Heart left ventricle (tissue), 16 donors: ENCODE measurements at regions of chr1 and their contacts with region 1.

Region 1: GRCh38 chr1:27525296-27526272 is 35.6 kb upstream of the WASF2 start:
- DNase-seq: peak; percentile 90 to 94 (median 91)
- ATAC-seq: peak; percentile 73 to 80 (median 78)
- H3K4me3 ChIP-seq: peak overlapping the region in 11 of 12 donors; percentile 7 to 65 (median 49)
- H3K27ac ChIP-seq: peak overlapping the region; percentile 83 to 97 (median 92)
- H3K4me1 ChIP-seq: peaks cover 25 to 93% (median 86%) of the 10 kb centered on the region in 12 donors
- H3K27me3 ChIP-seq: no peaks in the 10 kb centered on the region
- CTCF ChIP-seq: no peak
- POLR2A ChIP-seq: peak in 1 of 2 donors; percentile 16

Region 2: GRCh38 chr1:27402349-27402754 is 123.2 kb before region 1 on chr1:
- intact Hi-C with region 1: loop called in 1 of 10 experiments (anchors 10 kb)
- DNase-seq: peak; percentile 68 to 87 (median 83)
- ATAC-seq: peak; percentile 38 to 57 (median 42)
- H3K4me3 ChIP-seq: no peak overlapping the region
- H3K27ac ChIP-seq: peak overlapping the region; percentile 76 to 87 (median 85)
- H3K4me1 ChIP-seq: peaks cover 27 to 96% (median 80%) of the 10 kb centered on the region in 12 donors
- H3K27me3 ChIP-seq: no peaks in the 10 kb centered on the region
- CTCF ChIP-seq: peak; percentile 42 to 70 (median 60)
- POLR2A ChIP-seq: no peak

Region 3: GRCh38 chr1:27503797-27504587 is 21.6 kb before region 1 on chr1:
- intact Hi-C with region 1: no loop called
- DNase-seq: peak in 1 of 5 donors; percentile 56
- ATAC-seq: peak in 3 of 4 donors; percentile 3 to 15 (median 3)
- H3K4me3 ChIP-seq: peak overlapping the region in 9 of 12 donors; percentile 2 to 46 (median 34)
- H3K27ac ChIP-seq: peak overlapping the region; percentile 88 to 99 (median 93)
- H3K4me1 ChIP-seq: peaks cover 8 to 38% (median 25%) of the 10 kb centered on the region in 12 donors
- H3K27me3 ChIP-seq: no peaks in the 10 kb centered on the region
- CTCF ChIP-seq: no peak
- POLR2A ChIP-seq: no peak

Region 4: DNA sequence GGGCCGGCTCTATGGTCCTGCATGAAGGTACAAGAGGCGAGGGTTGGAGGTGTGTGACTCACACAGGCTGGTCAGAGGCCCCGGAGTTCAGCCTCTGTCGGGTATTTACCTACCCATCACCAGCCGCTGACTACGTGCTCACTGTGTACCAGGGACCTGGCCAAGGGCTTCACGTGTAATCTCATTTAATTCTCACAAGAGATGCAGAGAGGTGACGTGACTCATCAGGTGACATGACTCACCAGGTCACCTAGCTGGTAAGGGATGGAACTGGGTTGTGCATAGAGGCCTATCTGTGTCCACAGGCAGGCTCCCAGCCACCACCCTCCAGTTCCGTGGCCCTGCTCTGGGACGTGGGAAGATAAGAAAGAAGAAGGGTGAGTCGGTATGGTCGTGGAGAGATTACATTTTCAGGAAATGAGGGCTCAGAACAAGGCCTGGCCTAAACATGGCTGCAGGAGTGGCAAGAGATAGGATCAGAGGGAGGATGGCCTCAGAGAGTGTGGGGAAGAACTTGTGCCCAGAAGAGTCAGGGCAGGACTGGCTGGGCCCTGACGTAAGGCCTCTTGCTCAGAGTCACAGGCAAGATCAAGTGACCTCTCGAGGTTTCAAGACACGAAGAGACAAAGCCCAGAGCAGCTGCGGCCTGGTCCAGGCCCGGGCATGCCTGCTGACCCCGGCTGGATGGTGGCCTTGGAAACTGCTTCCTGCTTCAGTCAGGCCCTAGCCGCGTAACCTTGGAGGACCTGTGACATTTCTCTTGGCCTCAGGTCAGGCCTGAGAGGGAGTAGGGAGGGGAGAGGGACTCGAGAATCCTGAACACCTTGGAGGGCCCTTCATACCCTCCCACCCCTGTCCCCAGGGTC is 17.1 kb after region 1 on chr1:
- intact Hi-C with region 1: loop called in 1 of 10 experiments (anchors 2 kb)
- DNase-seq: peak in 4 of 5 donors; percentile 62 to 88 (median 79)
- ATAC-seq: peak; percentile 39 to 80 (median 64)
- H3K4me3 ChIP-seq: no peak overlapping the region
- H3K27ac ChIP-seq: peak overlapping the region; percentile 8 to 94 (median 88)
- H3K4me1 ChIP-seq: peaks cover 12 to 95% (median 80%) of the 10 kb centered on the region in 12 donors
- H3K27me3 ChIP-seq: no peaks in the 10 kb centered on the region
- CTCF ChIP-seq: no peak
- POLR2A ChIP-seq: peak in 1 of 2 donors; percentile 13

Region 5: GRCh38 chr1:27568300-27569087 is 42.9 kb after region 1 on chr1:
- intact Hi-C with region 1: loop called in 1 of 10 experiments (anchors 5 kb)
- DNase-seq: peak; percentile 95 to 97 (median 96)
- ATAC-seq: peak; percentile 71 to 86 (median 80)
- H3K4me3 ChIP-seq: peak overlapping the region in 10 of 12 donors; percentile 6 to 50 (median 42)
- H3K27ac ChIP-seq: peak overlapping the region; percentile 43 to 99 (median 94)
- H3K4me1 ChIP-seq: peaks cover 40 to 100% (median 96%) of the 10 kb centered on the region in 12 donors
- H3K27me3 ChIP-seq: no peaks in the 10 kb centered on the region
- CTCF ChIP-seq: peak; percentile 58 to 90 (median 77)
- POLR2A ChIP-seq: peak in 1 of 2 donors; percentile 59